MCF 10A (cell line): ENCODE measurements at regions of chr12 and their contacts with region 1.

Region 1: DNA sequence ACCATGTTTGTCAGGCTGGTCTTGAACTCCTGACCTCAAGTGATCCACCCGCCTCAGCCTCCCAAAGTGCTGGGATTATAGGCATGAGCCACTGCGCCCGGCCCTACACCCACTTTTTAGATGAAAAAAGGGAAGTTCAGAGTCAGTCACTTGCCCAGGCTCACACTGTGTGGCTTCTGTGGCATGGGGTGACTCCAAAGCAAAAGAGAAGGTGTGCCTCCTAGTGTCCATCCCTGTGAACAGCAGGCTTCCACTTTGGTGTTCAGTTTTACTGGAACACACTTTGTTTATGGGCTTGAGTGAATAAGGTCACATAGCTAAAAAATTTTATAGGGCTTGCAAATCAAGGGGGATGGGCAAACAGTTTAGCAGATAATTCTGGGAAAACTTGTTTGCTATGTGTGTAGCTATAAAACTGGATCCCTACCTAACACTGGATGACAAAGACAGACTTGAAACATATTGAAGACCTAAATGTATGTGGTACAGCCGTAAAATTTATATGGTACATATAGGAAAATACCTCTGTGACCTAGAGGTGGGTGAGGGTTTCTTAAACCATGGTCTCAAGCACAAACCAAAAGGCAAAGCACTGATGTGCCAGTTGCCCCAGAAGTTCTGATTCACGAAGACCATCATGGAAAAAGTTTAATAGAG is 54.9 kb downstream of the EID3 start:
- DNase-seq: peak; percentile 64
- H3K4me3 Mint-ChIP-seq: no peak overlapping the region
- H3K27ac Mint-ChIP-seq: no peak overlapping the region
- H3K4me1 Mint-ChIP-seq: peaks cover 4% of the 10 kb centered on the region
- H3K27me3 Mint-ChIP-seq: no peaks in the 10 kb centered on the region
- CTCF ChIP-seq: peak; percentile 68

Region 2: GRCh38 chr12:103632554-103633216 is 725.8 kb before region 1 on chr12:
- CTCF ChIA-PET with region 1: no interaction called
- POLR2A ChIA-PET with region 1: no interaction called
- intact Hi-C with region 1: no loop called
- DNase-seq: peak; percentile 82
- H3K4me3 Mint-ChIP-seq: no peak overlapping the region
- H3K27ac Mint-ChIP-seq: no peak overlapping the region
- H3K4me1 Mint-ChIP-seq: no peaks in the 10 kb centered on the region
- H3K27me3 Mint-ChIP-seq: no peaks in the 10 kb centered on the region
- CTCF ChIP-seq: peak; percentile 99

Region 3: GRCh38 chr12:104177663-104178501 is 180.6 kb before region 1 on chr12:
- CTCF ChIA-PET with region 1: no interaction called
- POLR2A ChIA-PET with region 1: no interaction called
- intact Hi-C with region 1: loop called (anchors 1 kb)
- DNase-seq: peak; percentile 96
- H3K4me3 Mint-ChIP-seq: peak overlapping the region; percentile 52
- H3K27ac Mint-ChIP-seq: peak overlapping the region; percentile 89
- H3K4me1 Mint-ChIP-seq: peaks cover 50% of the 10 kb centered on the region
- H3K27me3 Mint-ChIP-seq: no peaks in the 10 kb centered on the region
- CTCF ChIP-seq: peak; percentile 56